ENCODE measurements at regions of chr7 and their contacts with region 1.

Region 1: GRCh38 chr7:40468891-40469864 is 334.4 kb downstream of the SUGCT start:
- DNase-seq: no peak
- H3K4me3 ChIP-seq: no peak overlapping the region
- H3K27ac ChIP-seq: no peak overlapping the region
- H3K4me1 ChIP-seq: no peaks in the 10 kb centered on the region
- H3K27me3 ChIP-seq: no peaks in the 10 kb centered on the region
- CTCF ChIP-seq: no peak
- POLR2A ChIP-seq: no peak

Region 2: DNA sequence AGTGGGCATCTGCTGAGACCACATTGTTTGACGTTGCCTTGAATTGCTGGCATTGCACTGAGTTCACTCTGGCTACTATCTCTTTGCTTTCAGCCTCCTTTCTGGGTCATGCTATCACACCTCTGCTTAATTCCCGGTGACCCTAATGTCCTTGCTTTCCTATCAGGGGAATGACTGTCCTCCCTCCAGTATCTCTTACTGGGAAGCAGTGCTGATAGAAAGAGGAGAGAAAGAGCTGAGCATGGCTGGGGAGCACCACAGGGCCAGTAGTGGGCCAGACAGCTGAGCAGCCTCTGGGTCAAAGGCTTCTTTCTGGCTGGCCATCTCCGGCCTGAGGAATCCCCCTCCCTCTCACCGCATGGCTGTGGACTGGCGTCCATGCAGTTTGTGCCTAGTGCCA is 805.0 kb after region 1 on chr7:
- intact Hi-C with region 1: loop called (anchors 5 kb)
- DNase-seq: no peak
- H3K4me3 ChIP-seq: no peak overlapping the region
- H3K27ac ChIP-seq: no peak overlapping the region
- H3K4me1 ChIP-seq: no peaks in the 10 kb centered on the region
- H3K27me3 ChIP-seq: no peaks in the 10 kb centered on the region
- CTCF ChIP-seq: no peak
- POLR2A ChIP-seq: no peak

Region 3: DNA sequence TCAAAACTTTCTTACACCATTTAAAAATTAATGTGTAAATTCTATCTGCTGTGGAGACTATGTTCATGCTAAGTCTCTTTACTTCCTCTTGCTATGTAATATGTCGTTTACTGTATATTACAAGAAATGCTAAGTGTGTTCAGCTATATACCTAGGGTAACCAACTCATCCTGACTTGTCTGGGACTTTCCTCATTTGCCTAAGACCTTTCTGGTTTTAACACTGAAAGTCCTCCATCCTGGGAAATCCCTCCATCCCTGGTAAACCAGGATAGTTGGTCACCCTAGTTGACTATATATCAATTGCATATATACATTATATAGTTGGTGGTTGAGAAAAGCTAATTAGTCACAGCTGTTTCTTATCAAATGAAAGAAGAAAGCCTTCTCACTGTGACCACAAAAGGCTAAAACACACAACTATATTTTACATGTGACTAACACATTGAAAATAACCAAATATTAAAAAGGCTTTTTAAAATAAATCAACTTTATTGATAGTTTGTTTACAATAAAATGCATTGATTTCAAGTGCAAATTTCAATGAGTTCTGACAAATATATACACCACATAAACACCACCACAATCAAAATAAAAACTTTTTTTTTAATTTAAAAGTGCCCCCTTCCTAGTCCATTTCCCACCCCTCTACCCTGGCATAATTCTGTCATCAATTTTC is 1401.4 kb after region 1 on chr7:
- intact Hi-C with region 1: no loop called
- DNase-seq: no peak
- H3K4me3 ChIP-seq: no peak overlapping the region
- H3K27ac ChIP-seq: peak overlapping the region in 1 of 2 donors; percentile 12
- H3K4me1 ChIP-seq: no peaks in the 10 kb centered on the region
- H3K27me3 ChIP-seq: no peaks in the 10 kb centered on the region
- CTCF ChIP-seq: no peak
- POLR2A ChIP-seq: no peak

Measured in breast epithelium (tissue), 4 donors.